ENCODE measurements at regions of chr9 and their contacts with region 1.

Region 1: DNA sequence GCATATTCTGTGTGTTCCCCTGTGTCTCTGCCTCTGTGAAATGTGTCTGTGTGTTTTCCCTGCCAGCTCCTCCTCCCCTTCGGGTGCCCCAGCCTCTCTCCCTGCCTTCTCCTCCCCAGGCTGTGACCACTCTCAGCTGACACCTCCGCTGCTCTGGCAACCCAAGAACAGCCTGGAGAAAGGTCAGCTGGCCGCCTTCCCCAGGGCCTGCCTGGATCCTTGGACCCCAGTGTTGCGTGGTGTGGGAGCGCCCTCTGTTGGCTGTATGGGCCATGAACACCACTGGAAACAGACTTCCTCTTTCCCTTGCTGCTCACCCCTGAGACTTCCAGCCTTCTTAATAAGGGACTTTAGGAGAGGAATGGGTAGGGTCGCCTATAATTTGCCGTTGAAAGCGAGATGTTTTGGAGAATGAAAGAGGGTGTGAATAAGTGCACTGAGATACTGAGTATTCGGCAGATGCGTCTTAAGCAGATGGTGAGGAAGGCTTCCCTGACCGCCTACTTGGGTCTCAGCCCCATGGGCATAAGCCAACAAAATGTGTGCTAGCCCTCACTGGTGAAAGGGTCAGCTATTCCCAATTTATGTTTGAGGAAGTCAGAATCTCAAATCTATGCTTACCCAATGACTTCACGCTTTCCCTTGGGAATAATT is 114.9 kb upstream of the TRIM32 start:
- DNase-seq: no peak
- ATAC-seq: peak; percentile 87
- H3K4me3 ChIP-seq: no peak overlapping the region
- H3K27ac ChIP-seq: no peak overlapping the region
- H3K4me1 ChIP-seq: peaks cover 6% of the 10 kb centered on the region; the same call in 1 of the 2 replicates
- H3K27me3 ChIP-seq: no peaks in the 10 kb centered on the region
- CTCF ChIP-seq: peak; percentile 80

Region 2: GRCh38 chr9:115883457-115884329 is 688.5 kb before region 1 on chr9:
- CTCF ChIA-PET with region 1: no interaction called
- POLR2A ChIA-PET with region 1: no interaction called
- in situ Hi-C with region 1: no loop called
- intact Hi-C with region 1: loop called (anchors 10 kb)
- DNase-seq: no peak
- ATAC-seq: no peak; the same call in 1 of the 2 replicates
- H3K4me3 ChIP-seq: no peak overlapping the region
- H3K27ac ChIP-seq: no peak overlapping the region
- H3K4me1 ChIP-seq: no peaks in the 10 kb centered on the region
- H3K27me3 ChIP-seq: no peaks in the 10 kb centered on the region
- CTCF ChIP-seq: peak; percentile 53

Region 3: DNA sequence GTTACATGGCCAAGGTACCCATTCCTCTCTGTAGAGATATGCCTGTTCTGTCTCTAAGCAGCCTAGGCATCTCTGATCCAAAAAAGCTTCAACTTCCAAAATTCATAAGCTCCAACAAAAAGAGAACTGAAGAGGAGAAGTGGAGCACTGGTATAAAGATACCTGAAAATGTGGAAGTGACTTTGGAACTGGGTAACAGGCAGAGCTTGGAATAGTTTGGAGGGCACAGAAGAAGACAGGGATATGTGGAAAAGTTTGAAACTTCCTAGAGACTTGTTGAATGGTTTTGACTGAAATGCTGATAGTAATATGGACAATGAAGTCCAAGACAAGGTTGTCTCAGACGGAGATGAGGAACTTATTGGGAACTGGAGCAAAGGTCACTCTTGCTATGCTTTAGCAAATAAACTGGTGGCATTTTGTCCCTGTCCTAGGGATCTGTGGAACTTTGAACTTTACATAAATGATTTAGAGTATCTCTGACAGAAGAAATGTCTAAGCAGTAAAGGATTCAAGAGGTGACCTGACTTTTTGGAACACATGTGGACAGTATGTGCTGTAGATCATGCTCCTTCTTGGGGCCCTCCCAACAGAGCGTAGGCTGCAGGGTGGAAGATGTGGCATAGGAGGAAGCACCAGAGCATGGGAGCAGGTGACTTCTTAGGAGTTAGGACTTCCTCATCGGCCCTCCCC is 47.3 kb before region 1 on chr9:
- CTCF ChIA-PET with region 1: no interaction called
- POLR2A ChIA-PET with region 1: no interaction called
- in situ Hi-C with region 1: no loop called
- intact Hi-C with region 1: no loop called
- DNase-seq: no peak
- ATAC-seq: no peak
- H3K4me3 ChIP-seq: no peak overlapping the region
- H3K27ac ChIP-seq: no peak overlapping the region
- H3K4me1 ChIP-seq: no peaks in the 10 kb centered on the region
- H3K27me3 ChIP-seq: no peaks in the 10 kb centered on the region
- CTCF ChIP-seq: no peak

Measured in Panc1 (cell line).